Natural killer cell (primary cell): ENCODE measurements at regions of chr2 and their contacts with region 1.

Region 1: GRCh38 chr2:212089873-212090272 is 448.7 kb downstream of the ERBB4 start:
- DNase-seq: no peak
- ATAC-seq: no peak
- H3K4me3 ChIP-seq: no peak overlapping the region
- H3K4me3 Mint-ChIP-seq: no peak overlapping the region
- H3K27ac ChIP-seq: no peak overlapping the region
- H3K27ac Mint-ChIP-seq: no peak overlapping the region
- H3K4me1 ChIP-seq: no peaks in the 10 kb centered on the region
- H3K4me1 Mint-ChIP-seq: no peaks in the 10 kb centered on the region
- H3K27me3 ChIP-seq: no peaks in the 10 kb centered on the region
- H3K27me3 Mint-ChIP-seq: no peaks in the 10 kb centered on the region
- CTCF ChIP-seq: no peak

Region 2: DNA sequence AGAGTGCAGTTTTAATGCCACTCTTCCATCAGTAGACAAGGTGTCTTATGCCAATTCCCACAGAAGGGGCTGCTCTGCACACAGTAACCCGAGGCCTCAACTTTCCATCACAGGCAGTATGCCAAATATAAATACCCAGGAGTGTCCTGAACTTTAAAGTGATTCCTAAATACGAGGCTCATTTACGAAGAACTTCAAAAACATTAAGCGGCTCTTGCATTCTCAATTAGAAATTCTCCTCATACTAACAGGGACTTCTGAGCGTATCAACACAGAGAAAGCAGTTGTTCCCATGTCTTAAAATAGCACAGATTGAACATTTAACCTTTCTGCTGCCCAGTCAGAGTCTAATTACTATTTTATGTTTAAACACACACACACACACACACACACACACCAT is 189.9 kb before region 1 on chr2:
- intact Hi-C with region 1: no loop called
- DNase-seq: no peak
- ATAC-seq: no peak
- H3K4me3 ChIP-seq: no peak overlapping the region
- H3K4me3 Mint-ChIP-seq: no peak overlapping the region
- H3K27ac ChIP-seq: no peak overlapping the region
- H3K27ac Mint-ChIP-seq: no peak overlapping the region
- H3K4me1 ChIP-seq: no peaks in the 10 kb centered on the region
- H3K4me1 Mint-ChIP-seq: no peaks in the 10 kb centered on the region
- H3K27me3 ChIP-seq: no peaks in the 10 kb centered on the region
- H3K27me3 Mint-ChIP-seq: no peaks in the 10 kb centered on the region
- CTCF ChIP-seq: no peak

Region 3: GRCh38 chr2:212147921-212148513 is 58.1 kb after region 1 on chr2:
- intact Hi-C with region 1: no loop called
- DNase-seq: no peak
- ATAC-seq: no peak
- H3K4me3 ChIP-seq: no peak overlapping the region
- H3K4me3 Mint-ChIP-seq: no peak overlapping the region
- H3K27ac ChIP-seq: no peak overlapping the region
- H3K27ac Mint-ChIP-seq: no peak overlapping the region
- H3K4me1 ChIP-seq: no peaks in the 10 kb centered on the region
- H3K4me1 Mint-ChIP-seq: no peaks in the 10 kb centered on the region
- H3K27me3 ChIP-seq: no peaks in the 10 kb centered on the region
- H3K27me3 Mint-ChIP-seq: no peaks in the 10 kb centered on the region
- CTCF ChIP-seq: no peak

Region 4: GRCh38 chr2:212193056-212193455 is 103.2 kb after region 1 on chr2:
- intact Hi-C with region 1: no loop called
- DNase-seq: no peak
- ATAC-seq: no peak
- H3K4me3 ChIP-seq: no peak overlapping the region
- H3K4me3 Mint-ChIP-seq: no peak overlapping the region
- H3K27ac ChIP-seq: no peak overlapping the region
- H3K27ac Mint-ChIP-seq: no peak overlapping the region
- H3K4me1 ChIP-seq: no peaks in the 10 kb centered on the region
- H3K4me1 Mint-ChIP-seq: no peaks in the 10 kb centered on the region
- H3K27me3 ChIP-seq: no peaks in the 10 kb centered on the region
- H3K27me3 Mint-ChIP-seq: no peaks in the 10 kb centered on the region
- CTCF ChIP-seq: no peak

Region 5: DNA sequence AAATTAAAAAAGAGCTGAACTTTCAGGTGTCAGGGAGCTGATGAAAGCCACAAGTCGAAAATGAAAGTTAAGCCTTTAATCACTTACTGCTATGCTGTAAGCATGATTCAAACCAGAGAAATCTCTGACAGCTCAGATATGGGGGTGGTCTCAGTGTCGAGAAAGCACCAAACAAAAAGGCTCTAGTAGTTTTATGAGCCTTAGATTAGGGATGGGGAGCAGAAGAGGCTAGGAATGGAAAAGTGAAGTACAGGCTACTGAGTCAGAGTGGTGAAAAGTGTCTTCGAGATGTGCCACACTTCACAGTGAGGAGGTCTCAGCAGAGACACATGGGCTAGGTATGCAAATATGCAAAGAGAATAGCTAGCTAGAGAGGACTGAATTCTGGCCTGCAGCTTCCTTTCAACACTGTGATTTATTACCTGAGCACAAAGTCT is 1676.6 kb after region 1 on chr2:
- intact Hi-C with region 1: loop called (anchors 5 kb)
- DNase-seq: no peak
- ATAC-seq: no peak
- H3K4me3 ChIP-seq: no peak overlapping the region
- H3K4me3 Mint-ChIP-seq: no peak overlapping the region
- H3K27ac ChIP-seq: no peak overlapping the region
- H3K27ac Mint-ChIP-seq: no peak overlapping the region
- H3K4me1 ChIP-seq: no peaks in the 10 kb centered on the region
- H3K4me1 Mint-ChIP-seq: no peaks in the 10 kb centered on the region
- H3K27me3 ChIP-seq: no peaks in the 10 kb centered on the region
- H3K27me3 Mint-ChIP-seq: no peaks in the 10 kb centered on the region
- CTCF ChIP-seq: no peak